Activated naive CD4-positive, alpha-beta T cell treated with anti-CD3 and anti-CD28 coated beads for 36 hours (primary cell): ENCODE measurements at regions of chr6 and their contacts with region 1.

Region 1: DNA sequence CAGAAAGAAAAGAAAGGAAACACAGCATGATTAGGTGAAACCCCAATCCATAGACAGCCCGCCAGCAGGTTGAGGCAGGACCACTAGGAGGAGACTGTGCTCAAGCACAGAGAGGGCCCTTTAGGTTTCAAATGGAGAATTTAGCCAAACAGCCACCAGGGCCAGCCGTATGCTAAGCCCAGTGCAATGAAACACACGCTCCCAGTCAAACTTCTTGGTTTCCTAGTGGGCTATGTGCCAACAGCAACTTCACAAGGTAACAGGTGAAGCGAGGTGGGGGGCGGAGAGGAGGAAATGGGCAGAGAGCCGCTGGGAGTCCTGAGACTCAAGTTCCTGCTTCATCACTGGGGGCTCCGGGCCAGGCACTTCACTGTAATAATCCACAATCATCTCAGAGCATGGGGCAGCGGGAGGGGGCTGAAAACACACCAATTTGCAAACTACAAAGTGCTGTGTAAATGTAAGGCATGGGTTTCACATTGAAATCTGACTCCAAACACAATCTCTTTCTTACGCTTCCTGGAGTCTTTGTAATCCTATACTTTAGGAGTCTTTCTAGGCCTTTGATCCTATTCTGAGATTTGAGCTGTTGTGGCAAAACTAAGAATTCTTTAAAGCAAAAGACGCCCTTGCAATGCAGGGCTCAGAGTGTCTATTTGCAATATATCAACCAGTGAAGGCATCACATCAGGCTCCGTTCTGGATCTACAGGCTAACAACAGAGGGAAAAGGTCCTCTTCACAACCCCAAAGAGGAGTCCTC is 117.3 kb downstream of the OPRM1 start:
- DNase-seq: peak; percentile 86
- H3K4me3 Mint-ChIP-seq: peak overlapping the region; percentile 60
- H3K27ac Mint-ChIP-seq: peak overlapping the region; percentile 77
- H3K4me1 Mint-ChIP-seq: peaks cover 53% of the 10 kb centered on the region
- H3K27me3 Mint-ChIP-seq: no peaks in the 10 kb centered on the region

Region 2: GRCh38 chr6:152982768-152983636 is 1173.3 kb before region 1 on chr6 and contains the start of gene FBXO5:
- CTCF ChIA-PET with region 1: no interaction called
- intact Hi-C with region 1: loop called (anchors 2 kb)
- DNase-seq: peak; percentile 97
- H3K4me3 Mint-ChIP-seq: peak within 1 kb of the TSS; percentile 99
- H3K27ac Mint-ChIP-seq: peak within 1 kb of the TSS; percentile 100
- H3K4me1 Mint-ChIP-seq: peaks cover 44% of the 10 kb centered on the region
- H3K27me3 Mint-ChIP-seq: no peaks in the 10 kb centered on the region
- total RNA-seq, gene FBXO5: 61.4 to 62.3 TPM

Region 3: DNA sequence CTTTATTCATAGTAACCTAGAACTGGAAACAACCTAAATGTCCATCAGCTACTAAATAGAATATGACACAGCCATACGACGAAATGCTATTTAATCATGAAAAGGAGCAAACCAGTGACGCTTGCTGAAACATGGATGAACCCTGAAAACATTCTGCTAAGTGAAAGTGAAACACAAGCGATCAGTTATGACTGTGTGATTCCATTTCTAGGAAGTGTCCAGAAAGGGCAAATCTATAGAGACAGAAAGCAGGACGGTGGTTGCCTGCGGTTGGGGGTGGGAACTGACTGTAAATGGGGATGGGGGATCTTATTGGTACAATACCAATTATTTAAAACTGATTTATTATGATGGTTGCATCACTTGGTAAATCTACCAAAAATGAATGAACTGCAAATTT is 73.5 kb after region 1 on chr6:
- CTCF ChIA-PET with region 1: interaction called, 11 read pairs
- intact Hi-C with region 1: loop called (anchors 1 kb)
- DNase-seq: peak; percentile 84
- H3K4me3 Mint-ChIP-seq: peak overlapping the region; percentile 66
- H3K27ac Mint-ChIP-seq: peak overlapping the region; percentile 86
- H3K4me1 Mint-ChIP-seq: peaks cover 81% of the 10 kb centered on the region
- H3K27me3 Mint-ChIP-seq: no peaks in the 10 kb centered on the region

Region 4: DNA sequence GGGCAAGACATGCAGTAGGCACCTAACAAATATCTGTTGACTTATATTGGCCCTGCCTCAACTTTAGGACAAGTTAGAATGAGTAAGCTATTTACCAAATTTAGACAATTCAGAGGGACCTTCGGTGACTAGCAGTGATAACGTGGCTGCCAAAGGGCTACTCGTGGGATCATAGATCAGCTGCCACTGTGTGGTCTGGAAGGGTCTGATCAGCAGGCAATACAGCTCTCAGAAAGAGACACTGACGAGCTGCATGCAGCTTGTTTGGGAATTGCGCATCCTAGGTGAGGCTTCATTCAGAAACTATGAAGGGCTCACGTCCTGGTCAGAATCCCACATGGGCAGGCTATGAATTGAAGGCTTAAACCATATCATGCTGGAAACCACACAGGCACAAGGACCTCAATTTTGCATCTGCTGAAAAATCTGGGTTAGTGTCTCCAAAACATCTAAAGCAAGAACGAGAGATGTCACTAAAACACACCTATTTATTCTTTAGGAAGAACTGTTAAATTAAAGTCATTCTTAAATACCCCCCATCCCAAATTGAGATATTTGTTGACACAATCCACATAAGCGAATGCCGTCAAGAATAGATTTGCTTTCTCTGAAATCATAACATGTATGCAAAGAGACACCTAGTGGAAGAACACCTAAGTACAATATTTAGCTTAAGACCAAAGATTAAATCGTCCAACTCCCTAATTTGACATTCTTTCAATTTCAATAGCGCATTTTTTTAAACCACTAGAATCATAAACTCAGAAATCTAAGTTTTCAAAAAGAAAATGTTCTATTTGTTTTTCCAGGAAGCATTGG is 120.7 kb after region 1 on chr6:
- CTCF ChIA-PET with region 1: interaction called, 102 read pairs
- intact Hi-C with region 1: loop called (anchors 1 kb)
- DNase-seq: no peak
- H3K4me3 Mint-ChIP-seq: peak overlapping the region; percentile 65
- H3K27ac Mint-ChIP-seq: no peak overlapping the region
- H3K4me1 Mint-ChIP-seq: peaks cover 34% of the 10 kb centered on the region
- H3K27me3 Mint-ChIP-seq: no peaks in the 10 kb centered on the region

Region 5: GRCh38 chr6:154370545-154370944 is 214.2 kb after region 1 on chr6:
- CTCF ChIA-PET with region 1: interaction called, 31 read pairs
- intact Hi-C with region 1: loop called (anchors 1 kb)
- DNase-seq: peak; percentile 47
- H3K4me3 Mint-ChIP-seq: no peak overlapping the region
- H3K27ac Mint-ChIP-seq: no peak overlapping the region
- H3K4me1 Mint-ChIP-seq: peaks cover 27% of the 10 kb centered on the region
- H3K27me3 Mint-ChIP-seq: peaks cover 7% of the 10 kb centered on the region

Region 6: DNA sequence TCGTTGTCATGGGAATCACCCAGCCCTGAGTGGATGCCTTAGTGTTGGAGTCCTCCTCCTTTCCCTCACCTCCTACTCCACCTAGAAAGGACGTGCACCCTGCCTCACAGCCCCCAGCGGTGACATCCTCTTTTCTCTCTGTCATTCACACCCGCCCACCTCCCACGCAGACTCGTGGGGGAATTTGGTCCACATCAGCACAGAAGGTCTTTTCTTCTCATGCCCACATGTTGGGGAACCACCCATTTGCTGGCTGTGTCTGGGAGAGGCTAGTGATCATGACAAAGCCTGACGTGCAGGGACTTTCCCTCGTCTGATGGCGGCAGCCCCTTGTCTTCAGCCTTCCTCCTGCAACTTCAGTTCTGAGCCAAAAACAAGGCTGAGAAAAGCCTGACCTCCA is 450.1 kb after region 1 on chr6:
- CTCF ChIA-PET with region 1: no interaction called
- intact Hi-C with region 1: loop called (anchors 5 kb)
- DNase-seq: peak; percentile 97
- H3K4me3 Mint-ChIP-seq: peak overlapping the region; percentile 2
- H3K27ac Mint-ChIP-seq: peak overlapping the region; percentile 79
- H3K4me1 Mint-ChIP-seq: peaks cover 40% of the 10 kb centered on the region
- H3K27me3 Mint-ChIP-seq: peaks cover 2% of the 10 kb centered on the region

Region 7: GRCh38 chr6:154805288-154805911 is 649.1 kb after region 1 on chr6:
- CTCF ChIA-PET with region 1: no interaction called
- intact Hi-C with region 1: loop called (anchors 1 kb)
- DNase-seq: no peak
- H3K4me3 Mint-ChIP-seq: no peak overlapping the region
- H3K27ac Mint-ChIP-seq: no peak overlapping the region
- H3K4me1 Mint-ChIP-seq: peaks cover 6% of the 10 kb centered on the region
- H3K27me3 Mint-ChIP-seq: no peaks in the 10 kb centered on the region

Region 8: DNA sequence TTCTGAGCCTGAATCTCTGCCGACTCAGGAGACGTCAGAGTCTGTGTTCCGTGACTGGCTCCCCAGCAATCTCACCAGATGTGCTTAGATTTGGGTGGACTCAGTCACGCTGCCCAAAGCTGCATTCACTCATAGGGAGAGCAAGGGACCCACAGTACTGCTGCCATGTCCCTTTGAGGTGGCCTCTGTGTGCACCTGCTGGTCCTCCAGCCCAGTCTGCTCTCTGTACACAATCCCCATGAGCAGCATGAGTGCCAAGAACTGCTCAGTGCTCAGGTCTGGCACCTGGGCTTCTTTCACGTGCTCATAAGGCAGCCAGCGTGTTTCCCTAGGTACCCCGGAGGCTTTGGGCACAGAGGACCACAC is 794.6 kb after region 1 on chr6:
- CTCF ChIA-PET with region 1: no interaction called
- intact Hi-C with region 1: no loop called
- DNase-seq: no peak
- H3K4me3 Mint-ChIP-seq: no peak overlapping the region
- H3K27ac Mint-ChIP-seq: no peak overlapping the region
- H3K4me1 Mint-ChIP-seq: peaks cover 21% of the 10 kb centered on the region
- H3K27me3 Mint-ChIP-seq: no peaks in the 10 kb centered on the region